CD4-positive, alpha-beta T cell (primary cell): ENCODE measurements at regions of chr9 and their contacts with region 1.

Region 1: DNA sequence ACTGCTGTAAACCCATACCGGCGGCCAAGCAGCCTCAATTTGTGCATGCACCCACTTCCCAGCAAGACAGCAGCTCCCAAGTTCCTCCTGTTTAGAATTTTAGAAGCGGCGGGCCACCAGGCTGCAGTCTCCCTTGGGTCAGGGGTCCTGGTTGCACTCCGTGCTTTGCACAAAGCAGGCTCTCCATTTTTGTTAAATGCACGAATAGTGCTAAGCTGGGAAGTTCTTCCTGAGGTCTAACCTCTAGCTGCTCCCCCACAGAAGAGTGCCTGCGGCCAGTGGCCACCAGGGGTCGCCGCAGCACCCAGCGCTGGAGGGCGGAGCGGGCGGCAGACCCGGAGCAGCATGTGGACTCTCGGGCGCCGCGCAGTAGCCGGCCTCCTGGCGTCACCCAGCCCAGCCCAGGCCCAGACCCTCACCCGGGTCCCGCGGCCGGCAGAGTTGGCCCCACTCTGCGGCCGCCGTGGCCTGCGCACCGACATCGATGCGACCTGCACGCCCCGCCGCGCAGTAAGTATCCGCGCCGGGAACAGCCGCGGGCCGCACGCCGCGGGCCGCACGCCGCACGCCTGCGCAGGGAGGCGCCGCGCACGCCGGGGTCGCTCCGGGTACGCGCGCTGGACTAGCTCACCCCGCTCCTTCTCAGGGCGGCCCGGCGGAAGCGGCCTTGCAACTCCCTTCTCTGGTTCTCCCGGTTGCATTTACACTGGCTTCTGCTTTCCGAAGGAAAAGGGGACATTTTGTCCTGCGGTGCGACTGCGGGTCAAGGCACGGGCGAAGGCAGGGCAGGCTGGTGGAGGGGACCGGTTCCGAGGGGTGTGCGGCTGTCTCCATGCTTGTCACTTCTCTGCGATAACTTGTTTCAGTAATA is at the start of gene FXN:
- DNase-seq: peak; percentile 56 to 90 (median 78)
- ATAC-seq: peak; percentile 87
- H3K4me3 ChIP-seq: peak within 1 kb of the TSS; percentile 86
- H3K4me3 Mint-ChIP-seq: peak within 1 kb of the TSS; percentile 93
- H3K27ac ChIP-seq: peak within 1 kb of the TSS; percentile 35 to 58
- H3K27ac Mint-ChIP-seq: peak within 1 kb of the TSS; percentile 78
- H3K4me1 ChIP-seq: peaks cover 21% of the 10 kb centered on the region
- H3K4me1 Mint-ChIP-seq: peaks cover 31% of the 10 kb centered on the region
- H3K27me3 ChIP-seq: no peaks in the 10 kb centered on the region
- H3K27me3 Mint-ChIP-seq: no peaks in the 10 kb centered on the region
- CTCF ChIP-seq: peak; percentile 98
- total RNA-seq, gene FXN: 12.2 to 12.9 TPM

Region 2: DNA sequence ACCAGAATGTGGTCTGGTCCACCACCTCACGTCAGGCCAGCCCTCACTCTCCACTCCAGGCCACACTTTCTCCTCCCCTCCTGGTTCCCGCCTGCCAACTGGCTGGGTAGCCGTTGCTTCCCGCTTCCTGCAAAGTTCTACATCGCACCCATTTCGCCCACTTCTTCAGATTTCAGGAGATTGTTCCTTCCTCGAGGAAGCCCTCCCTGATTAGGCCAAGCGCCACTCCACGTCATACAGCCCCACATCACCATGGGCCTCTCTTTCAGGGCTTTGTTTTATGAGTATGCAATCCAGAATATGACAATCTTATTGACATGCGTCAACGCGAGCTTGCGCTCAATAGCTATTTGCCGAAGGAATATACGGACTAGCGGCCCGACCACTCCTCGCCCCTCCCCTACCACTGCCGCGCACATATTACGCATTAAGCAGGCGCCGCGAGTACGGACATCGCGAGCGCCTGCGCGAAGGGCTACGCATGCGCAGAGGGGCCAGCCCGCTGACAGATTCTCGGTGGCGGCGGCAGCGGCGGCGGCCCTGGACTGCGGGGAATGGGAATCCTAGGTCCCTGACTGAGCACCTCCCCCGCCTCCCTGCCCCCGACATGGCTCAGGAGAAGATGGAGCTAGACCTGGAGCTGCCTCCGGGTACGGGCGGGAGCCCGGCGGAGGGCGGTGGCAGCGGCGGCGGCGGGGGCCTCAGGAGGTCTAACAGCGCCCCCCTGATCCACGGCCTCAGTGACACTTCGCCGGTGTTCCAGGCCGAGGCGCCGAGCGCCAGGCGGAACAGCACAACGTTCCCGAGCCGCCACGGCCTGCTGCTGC is 255.9 kb before region 1 on chr9:
- CTCF ChIA-PET with region 1: interaction called, 3 read pairs
- POLR2A ChIA-PET with region 1: interaction called, 4 read pairs
- intact Hi-C with region 1: loop called in 1 of 2 experiments (anchors 5 kb)
- DNase-seq: peak; percentile 89 to 98 (median 93)
- ATAC-seq: peak; percentile 89
- H3K4me3 ChIP-seq: peak overlapping the region; percentile 85
- H3K4me3 Mint-ChIP-seq: no peak overlapping the region
- H3K27ac ChIP-seq: peak overlapping the region; percentile 90 to 95
- H3K27ac Mint-ChIP-seq: no peak overlapping the region
- H3K4me1 ChIP-seq: peaks cover 23% of the 10 kb centered on the region
- H3K4me1 Mint-ChIP-seq: no peaks in the 10 kb centered on the region
- H3K27me3 ChIP-seq: no peaks in the 10 kb centered on the region
- H3K27me3 Mint-ChIP-seq: peaks cover 5% of the 10 kb centered on the region
- CTCF ChIP-seq: peak; percentile 64

Region 3: GRCh38 chr9:68966496-68966944 is 69.2 kb before region 1 on chr9:
- CTCF ChIA-PET with region 1: no interaction called
- POLR2A ChIA-PET with region 1: no interaction called
- intact Hi-C with region 1: no loop called
- DNase-seq: no peak
- ATAC-seq: no peak
- H3K4me3 ChIP-seq: no peak overlapping the region
- H3K4me3 Mint-ChIP-seq: no peak overlapping the region
- H3K27ac ChIP-seq: no peak overlapping the region
- H3K27ac Mint-ChIP-seq: no peak overlapping the region
- H3K4me1 ChIP-seq: no peaks in the 10 kb centered on the region
- H3K4me1 Mint-ChIP-seq: no peaks in the 10 kb centered on the region
- H3K27me3 ChIP-seq: no peaks in the 10 kb centered on the region
- H3K27me3 Mint-ChIP-seq: no peaks in the 10 kb centered on the region
- CTCF ChIP-seq: no peak

Region 4: GRCh38 chr9:69019808-69020207 is 15.9 kb before region 1 on chr9:
- CTCF ChIA-PET with region 1: interaction called, 8 read pairs
- POLR2A ChIA-PET with region 1: interaction called, 32 read pairs
- intact Hi-C with region 1: no loop called
- DNase-seq: peak in 13 of 14 experiments; percentile 15 to 83 (median 42)
- ATAC-seq: peak; percentile 99
- H3K4me3 ChIP-seq: no peak overlapping the region
- H3K4me3 Mint-ChIP-seq: peak overlapping the region; percentile 68
- H3K27ac ChIP-seq: no peak overlapping the region
- H3K27ac Mint-ChIP-seq: peak overlapping the region; percentile 55
- H3K4me1 ChIP-seq: peaks cover 24% of the 10 kb centered on the region
- H3K4me1 Mint-ChIP-seq: peaks cover 50% of the 10 kb centered on the region
- H3K27me3 ChIP-seq: no peaks in the 10 kb centered on the region
- H3K27me3 Mint-ChIP-seq: no peaks in the 10 kb centered on the region
- CTCF ChIP-seq: no peak

Region 5: DNA sequence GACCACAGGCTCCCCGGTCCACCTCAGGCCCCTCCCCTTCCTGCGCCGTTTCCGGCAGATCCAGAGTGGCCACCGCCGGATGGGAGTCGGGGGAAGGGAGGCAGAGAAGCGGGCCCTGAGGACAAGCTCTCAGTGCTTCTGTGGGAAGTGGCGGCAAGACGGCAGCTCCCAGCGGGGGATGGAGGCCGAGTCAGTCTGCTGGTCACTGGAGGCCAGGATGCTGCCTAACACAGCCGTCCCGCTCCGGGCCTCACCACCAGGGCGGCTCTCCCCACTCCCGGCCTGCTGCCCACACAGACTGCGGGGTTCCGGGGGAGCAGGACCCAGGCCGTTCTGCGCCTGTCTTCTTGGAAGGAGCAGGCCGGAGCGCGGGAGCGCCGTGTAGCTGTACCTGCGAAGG is 31.3 kb after region 1 on chr9:
- CTCF ChIA-PET with region 1: no interaction called
- POLR2A ChIA-PET with region 1: no interaction called
- intact Hi-C with region 1: no loop called
- DNase-seq: no peak
- ATAC-seq: no peak
- H3K4me3 ChIP-seq: no peak overlapping the region
- H3K4me3 Mint-ChIP-seq: no peak overlapping the region
- H3K27ac ChIP-seq: no peak overlapping the region
- H3K27ac Mint-ChIP-seq: no peak overlapping the region
- H3K4me1 ChIP-seq: no peaks in the 10 kb centered on the region
- H3K4me1 Mint-ChIP-seq: no peaks in the 10 kb centered on the region
- H3K27me3 ChIP-seq: no peaks in the 10 kb centered on the region
- H3K27me3 Mint-ChIP-seq: no peaks in the 10 kb centered on the region
- CTCF ChIP-seq: no peak

Region 6: GRCh38 chr9:69093471-69094103 is 57.9 kb after region 1 on chr9:
- CTCF ChIA-PET with region 1: no interaction called
- POLR2A ChIA-PET with region 1: no interaction called
- intact Hi-C with region 1: no loop called
- DNase-seq: no peak
- ATAC-seq: no peak
- H3K4me3 ChIP-seq: no peak overlapping the region
- H3K4me3 Mint-ChIP-seq: no peak overlapping the region
- H3K27ac ChIP-seq: no peak overlapping the region
- H3K27ac Mint-ChIP-seq: no peak overlapping the region
- H3K4me1 ChIP-seq: no peaks in the 10 kb centered on the region
- H3K4me1 Mint-ChIP-seq: no peaks in the 10 kb centered on the region
- H3K27me3 ChIP-seq: no peaks in the 10 kb centered on the region
- H3K27me3 Mint-ChIP-seq: no peaks in the 10 kb centered on the region
- CTCF ChIP-seq: no peak

Region 7: GRCh38 chr9:69131682-69132081 is 96.0 kb after region 1 on chr9:
- CTCF ChIA-PET with region 1: no interaction called
- POLR2A ChIA-PET with region 1: no interaction called
- intact Hi-C with region 1: no loop called
- DNase-seq: no peak
- ATAC-seq: no peak
- H3K4me3 ChIP-seq: no peak overlapping the region
- H3K4me3 Mint-ChIP-seq: no peak overlapping the region
- H3K27ac ChIP-seq: no peak overlapping the region
- H3K27ac Mint-ChIP-seq: no peak overlapping the region
- H3K4me1 ChIP-seq: no peaks in the 10 kb centered on the region
- H3K4me1 Mint-ChIP-seq: no peaks in the 10 kb centered on the region
- H3K27me3 ChIP-seq: no peaks in the 10 kb centered on the region
- H3K27me3 Mint-ChIP-seq: no peaks in the 10 kb centered on the region
- CTCF ChIP-seq: no peak

Region 8: GRCh38 chr9:69193685-69194032 is 158.0 kb after region 1 on chr9:
- CTCF ChIA-PET with region 1: interaction called, 6 read pairs
- POLR2A ChIA-PET with region 1: interaction called, 7 read pairs
- intact Hi-C with region 1: loop called (anchors 1 kb)
- DNase-seq: no peak
- ATAC-seq: no peak
- H3K4me3 ChIP-seq: no peak overlapping the region
- H3K4me3 Mint-ChIP-seq: no peak overlapping the region
- H3K27ac ChIP-seq: no peak overlapping the region
- H3K27ac Mint-ChIP-seq: no peak overlapping the region
- H3K4me1 ChIP-seq: peaks cover 3% of the 10 kb centered on the region
- H3K4me1 Mint-ChIP-seq: peaks cover 27% of the 10 kb centered on the region
- H3K27me3 ChIP-seq: no peaks in the 10 kb centered on the region
- H3K27me3 Mint-ChIP-seq: no peaks in the 10 kb centered on the region
- CTCF ChIP-seq: no peak

Region 9: GRCh38 chr9:69759421-69760277 is 724.0 kb after region 1 on chr9 and contains the start of gene PTAR1:
- CTCF ChIA-PET with region 1: no interaction called
- POLR2A ChIA-PET with region 1: no interaction called
- intact Hi-C with region 1: loop called in 1 of 2 experiments (anchors 5 kb)
- DNase-seq: peak; percentile 78 to 96 (median 89)
- ATAC-seq: peak; percentile 82
- H3K4me3 ChIP-seq: peak within 1 kb of the TSS; percentile 87
- H3K4me3 Mint-ChIP-seq: peak within 1 kb of the TSS; percentile 98
- H3K27ac ChIP-seq: peak within 1 kb of the TSS; percentile 77 to 85
- H3K27ac Mint-ChIP-seq: peak within 1 kb of the TSS; percentile 93
- H3K4me1 ChIP-seq: peaks cover 9% of the 10 kb centered on the region
- H3K4me1 Mint-ChIP-seq: peaks cover 47% of the 10 kb centered on the region
- H3K27me3 ChIP-seq: no peaks in the 10 kb centered on the region
- H3K27me3 Mint-ChIP-seq: no peaks in the 10 kb centered on the region
- CTCF ChIP-seq: no peak
- total RNA-seq, gene PTAR1: 65.9 to 67.1 TPM

Region 10: GRCh38 chr9:70258692-70259511 is 1223.2 kb after region 1 on chr9 and contains the start of gene SMC5:
- CTCF ChIA-PET with region 1: no interaction called
- POLR2A ChIA-PET with region 1: no interaction called
- intact Hi-C with region 1: loop called in 1 of 2 experiments (anchors 10 kb)
- DNase-seq: peak; percentile 79 to 97 (median 88)
- ATAC-seq: peak; percentile 81
- H3K4me3 ChIP-seq: peak within 1 kb of the TSS; percentile 89
- H3K4me3 Mint-ChIP-seq: peak within 1 kb of the TSS; percentile 93
- H3K27ac ChIP-seq: peak within 1 kb of the TSS; percentile 89 to 94
- H3K27ac Mint-ChIP-seq: peak within 1 kb of the TSS; percentile 96
- H3K4me1 ChIP-seq: peaks cover 44% of the 10 kb centered on the region
- H3K4me1 Mint-ChIP-seq: peaks cover 61% of the 10 kb centered on the region
- H3K27me3 ChIP-seq: no peaks in the 10 kb centered on the region
- H3K27me3 Mint-ChIP-seq: no peaks in the 10 kb centered on the region
- CTCF ChIP-seq: no peak
- total RNA-seq, gene SMC5: 37.7 to 38.1 TPM